Endothelial cell of umbilical vein (primary cell): ENCODE measurements at regions of chr10 and their contacts with region 1.

Region 1: DNA sequence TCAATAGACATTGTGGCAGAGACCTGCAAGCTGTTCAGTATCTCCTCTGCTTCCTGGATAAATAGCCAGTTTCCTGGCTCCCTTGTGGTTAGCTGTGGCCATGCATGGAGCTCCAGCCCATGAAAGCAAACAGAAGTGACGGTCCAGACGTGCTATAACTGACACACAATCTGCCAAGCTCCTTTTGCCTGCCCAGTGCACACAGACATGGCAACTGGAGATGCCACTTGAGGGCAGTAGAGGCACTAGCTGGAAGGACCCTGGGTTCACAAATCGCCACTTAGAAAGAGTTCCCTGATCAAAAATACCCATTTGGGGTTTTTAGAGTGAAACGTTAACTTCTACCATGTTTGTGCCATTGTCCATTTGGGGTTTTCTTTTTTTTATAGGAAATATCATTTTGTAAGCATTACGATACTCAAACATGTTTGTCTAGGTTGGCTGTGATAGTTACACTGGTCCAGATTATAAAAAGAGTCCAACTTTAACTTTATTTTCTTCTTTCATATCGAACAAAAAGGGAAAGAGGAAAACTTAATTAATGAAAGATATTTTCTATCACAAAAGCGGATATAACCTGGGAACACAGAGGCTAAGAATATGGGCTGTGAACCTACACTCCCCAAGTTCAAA is 31.3 kb downstream of the KIN start:
- DNase-seq: peak; percentile 52
- H3K4me3 ChIP-seq: no peak overlapping the region
- H3K27ac ChIP-seq: no peak overlapping the region
- H3K4me1 ChIP-seq: no peaks in the 10 kb centered on the region
- H3K27me3 ChIP-seq: no peaks in the 10 kb centered on the region
- CTCF ChIP-seq: peak; percentile 48 to 70
- POLR2A ChIP-seq: no peak

Region 2: GRCh38 chr10:7480742-7481367 is 275.6 kb before region 1 on chr10:
- CTCF ChIA-PET with region 1: no interaction called
- POLR2A ChIA-PET with region 1: no interaction called
- dilution Hi-C with region 1: no loop called
- intact Hi-C with region 1: no loop called
- DNase-seq: no peak
- H3K4me3 ChIP-seq: no peak overlapping the region
- H3K27ac ChIP-seq: no peak overlapping the region
- H3K4me1 ChIP-seq: no peaks in the 10 kb centered on the region
- H3K27me3 ChIP-seq: no peaks in the 10 kb centered on the region
- CTCF ChIP-seq: no peak
- POLR2A ChIP-seq: no peak

Region 3: GRCh38 chr10:7501157-7501556 is 255.3 kb before region 1 on chr10:
- CTCF ChIA-PET with region 1: no interaction called
- POLR2A ChIA-PET with region 1: no interaction called
- dilution Hi-C with region 1: no loop called
- intact Hi-C with region 1: no loop called
- DNase-seq: no peak
- H3K4me3 ChIP-seq: no peak overlapping the region
- H3K27ac ChIP-seq: no peak overlapping the region
- H3K4me1 ChIP-seq: no peaks in the 10 kb centered on the region
- H3K27me3 ChIP-seq: no peaks in the 10 kb centered on the region
- CTCF ChIP-seq: no peak
- POLR2A ChIP-seq: no peak

Region 4: DNA sequence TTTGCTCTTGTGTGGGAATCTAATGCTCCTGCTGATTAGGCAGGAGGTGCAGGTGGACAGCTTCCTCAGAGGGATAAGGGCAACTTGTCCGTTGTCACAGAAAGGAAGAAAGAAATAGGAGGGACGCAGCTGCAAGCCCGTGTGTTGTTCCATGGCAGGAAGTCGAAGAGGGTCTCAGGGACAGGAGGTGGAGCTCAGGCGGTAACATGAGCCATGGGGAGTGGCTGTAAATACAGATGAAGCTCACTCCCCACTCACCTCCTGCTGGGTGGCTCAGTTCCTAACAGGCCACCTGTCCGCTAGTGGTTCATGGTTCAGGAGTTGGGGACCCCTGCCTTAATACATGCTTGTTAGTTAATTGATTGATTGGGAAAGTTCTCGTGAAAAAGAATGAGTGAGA is 244.0 kb before region 1 on chr10:
- CTCF ChIA-PET with region 1: no interaction called
- POLR2A ChIA-PET with region 1: no interaction called
- dilution Hi-C with region 1: no loop called
- intact Hi-C with region 1: no loop called
- DNase-seq: no peak
- H3K4me3 ChIP-seq: no peak overlapping the region
- H3K27ac ChIP-seq: no peak overlapping the region
- H3K4me1 ChIP-seq: no peaks in the 10 kb centered on the region
- H3K27me3 ChIP-seq: no peaks in the 10 kb centered on the region
- CTCF ChIP-seq: no peak
- POLR2A ChIP-seq: no peak

Region 5: DNA sequence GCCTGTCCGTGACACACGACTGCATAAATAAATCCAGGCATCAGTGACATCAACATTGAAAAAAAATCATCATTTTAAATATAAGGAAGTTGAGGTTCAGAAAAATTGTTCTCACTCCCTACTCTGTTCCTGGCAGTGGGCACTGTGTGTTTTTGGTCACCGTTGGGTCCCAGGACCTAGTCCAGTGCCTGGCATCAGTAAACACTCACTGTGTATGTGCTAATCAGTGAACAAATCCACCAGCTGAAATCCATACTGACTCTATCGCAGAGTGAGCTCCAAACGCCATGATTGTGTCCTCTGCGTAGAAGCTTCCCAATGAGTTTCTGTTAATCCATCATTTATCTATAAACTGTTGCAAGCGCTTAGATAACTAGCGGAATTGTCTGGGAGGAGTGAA is 12.2 kb before region 1 on chr10:
- CTCF ChIA-PET with region 1: interaction called, 13 read pairs
- POLR2A ChIA-PET with region 1: no interaction called
- dilution Hi-C with region 1: no loop called
- intact Hi-C with region 1: no loop called
- DNase-seq: no peak
- H3K4me3 ChIP-seq: no peak overlapping the region
- H3K27ac ChIP-seq: no peak overlapping the region
- H3K4me1 ChIP-seq: no peaks in the 10 kb centered on the region
- H3K27me3 ChIP-seq: no peaks in the 10 kb centered on the region
- CTCF ChIP-seq: no peak
- POLR2A ChIP-seq: no peak

Region 6: DNA sequence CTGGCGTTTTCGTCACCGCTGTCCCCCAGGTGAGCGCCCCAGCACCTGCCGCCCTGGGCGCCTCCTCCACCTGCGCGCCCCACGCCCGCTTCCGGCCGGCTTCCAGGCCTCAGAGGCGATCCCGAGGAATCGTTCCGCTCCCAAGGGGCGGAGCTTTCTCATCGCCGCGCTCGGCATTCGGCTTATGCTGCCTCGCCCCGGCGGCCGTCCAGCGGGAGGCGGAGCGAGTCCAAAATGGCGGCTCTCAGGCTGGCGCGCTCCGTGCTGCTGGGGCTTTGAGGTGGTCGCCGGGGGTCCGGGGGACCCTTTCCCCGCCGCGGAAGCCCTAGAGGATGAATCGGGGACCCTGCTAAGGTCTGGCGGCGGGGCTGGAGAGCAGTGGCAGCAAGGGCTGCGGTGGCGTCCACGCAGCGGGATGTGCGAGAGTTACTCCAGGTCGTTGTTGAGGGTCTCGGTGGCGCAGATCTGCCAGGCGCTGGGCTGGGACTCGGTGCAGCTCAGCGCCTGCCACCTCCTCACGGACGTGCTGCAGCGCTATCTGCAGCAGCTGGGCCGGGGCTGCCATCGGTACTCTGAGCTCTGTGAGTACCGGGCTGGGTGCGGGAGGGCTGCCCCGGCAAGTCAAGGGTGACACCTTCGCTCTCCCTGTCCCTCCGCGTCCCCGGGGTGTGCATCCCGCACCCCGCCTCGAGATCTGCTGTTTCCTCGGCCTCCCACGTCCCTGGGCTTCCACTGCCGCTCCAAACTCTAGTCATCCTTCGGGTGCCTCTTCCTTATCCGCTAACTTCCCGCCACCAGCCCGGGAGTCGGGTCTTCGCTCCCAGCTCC is 62.0 kb after region 1 on chr10 and contains the start of gene TAF3:
- CTCF ChIA-PET with region 1: interaction called, 14 read pairs
- POLR2A ChIA-PET with region 1: no interaction called
- dilution Hi-C with region 1: no loop called
- intact Hi-C with region 1: no loop called
- DNase-seq: peak; percentile 85
- H3K4me3 ChIP-seq: peak within 1 kb of the TSS; percentile 70 to 99 (median 83)
- H3K27ac ChIP-seq: peak within 1 kb of the TSS; percentile 6
- H3K4me1 ChIP-seq: peaks cover 4% of the 10 kb centered on the region
- H3K27me3 ChIP-seq: peaks cover 5 to 7% of the 10 kb centered on the region in 2 experiments
- CTCF ChIP-seq: no peak
- POLR2A ChIP-seq: peak; percentile 77
- total RNA-seq, gene TAF3: 10.1 and 10.5 TPM in 2 replicates

Region 7: GRCh38 chr10:9302120-9302746 is 1545.8 kb after region 1 on chr10:
- CTCF ChIA-PET with region 1: interaction called, 15 read pairs
- POLR2A ChIA-PET with region 1: no interaction called
- dilution Hi-C with region 1: no loop called
- intact Hi-C with region 1: loop called (anchors 2 kb)
- DNase-seq: peak; percentile 79
- H3K4me3 ChIP-seq: no peak overlapping the region
- H3K27ac ChIP-seq: no peak overlapping the region
- H3K4me1 ChIP-seq: no peaks in the 10 kb centered on the region
- H3K27me3 ChIP-seq: peaks cover 0 to 2% of the 10 kb centered on the region in 2 experiments
- CTCF ChIP-seq: peak in 1 of 2 donors; percentile 8
- POLR2A ChIP-seq: no peak